AG04450 (cell line): ENCODE measurements at regions of chr1 and their contacts with region 1.

Region 1: DNA sequence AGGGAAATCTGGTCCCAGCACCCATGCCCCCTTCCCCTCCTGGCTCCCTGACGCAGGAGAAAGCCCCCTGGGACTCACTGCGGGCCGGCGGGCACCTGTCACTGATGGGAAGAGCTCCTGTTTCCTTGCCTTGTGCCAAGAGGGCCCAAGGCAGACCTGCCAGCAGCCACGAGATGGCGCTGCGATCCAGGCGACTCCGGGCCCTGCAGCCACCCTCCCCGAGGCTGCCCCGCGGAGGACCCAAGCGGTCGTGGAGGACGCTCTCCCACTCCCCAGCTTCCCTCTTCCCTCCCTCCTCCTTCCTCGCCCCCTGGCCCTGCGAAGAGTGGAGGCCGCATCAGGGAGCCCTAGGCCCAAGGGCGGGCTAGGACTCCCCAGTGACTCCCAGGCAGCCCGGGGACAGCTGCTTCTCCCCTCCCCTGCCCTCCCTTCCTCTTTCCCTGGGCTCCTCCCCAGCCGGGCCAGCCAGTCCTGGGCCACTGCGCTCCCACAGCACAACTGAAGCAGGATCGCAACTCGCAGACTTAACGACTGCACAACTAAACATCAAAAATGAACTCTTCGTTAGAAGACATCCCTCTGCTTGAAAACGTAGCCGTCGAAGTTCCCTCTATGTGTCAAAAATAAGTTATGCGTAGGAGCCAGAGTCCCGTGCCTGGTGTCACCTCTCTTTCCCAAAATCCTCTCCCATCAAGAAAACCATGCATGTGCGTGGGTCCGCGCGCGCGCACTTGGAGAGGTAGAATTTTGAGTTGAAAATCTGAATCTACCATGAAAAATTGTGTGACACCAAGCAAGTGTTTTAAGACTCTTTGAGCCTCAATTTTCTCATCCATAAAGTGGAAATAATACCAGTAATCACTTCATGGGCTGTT is 34.2 kb downstream of the BATF3 start:
- DNase-seq: peak; percentile 41
- H3K4me3 ChIP-seq: peak overlapping the region; percentile 82
- H3K27ac ChIP-seq: peak overlapping the region; percentile 21
- H3K27me3 ChIP-seq: no peaks in the 10 kb centered on the region
- CTCF ChIP-seq: peak; percentile 92

Region 2: DNA sequence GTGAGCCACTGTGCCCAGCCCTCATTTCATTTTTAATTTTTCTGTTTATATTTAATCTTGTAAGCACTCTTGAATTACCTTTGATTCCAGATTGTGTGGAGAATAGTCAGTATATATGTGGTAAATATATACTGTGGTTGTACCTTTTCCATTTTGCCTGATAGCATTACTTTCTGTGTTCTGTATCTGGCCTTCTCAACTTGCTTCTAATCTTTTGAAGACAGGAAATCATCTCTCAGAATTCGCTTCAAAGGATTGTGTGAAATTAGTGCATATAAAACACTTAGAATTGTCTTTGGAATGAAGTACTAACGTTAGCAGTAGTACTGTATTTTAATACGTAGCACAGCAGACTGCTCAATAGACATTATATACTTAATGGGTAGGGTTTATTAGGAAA is 342.4 kb before region 1 on chr1:
- CTCF ChIA-PET with region 1: no interaction called
- POLR2A ChIA-PET with region 1: no interaction called
- DNase-seq: no peak
- H3K4me3 ChIP-seq: no peak overlapping the region
- H3K27ac ChIP-seq: no peak overlapping the region
- H3K27me3 ChIP-seq: no peaks in the 10 kb centered on the region
- CTCF ChIP-seq: no peak

Region 3: GRCh38 chr1:212469701-212470458 is 195.6 kb before region 1 on chr1:
- CTCF ChIA-PET with region 1: interaction called, 11 read pairs
- POLR2A ChIA-PET with region 1: no interaction called
- DNase-seq: peak; percentile 96
- H3K4me3 ChIP-seq: no peak overlapping the region
- H3K27ac ChIP-seq: peak overlapping the region; percentile 91
- H3K27me3 ChIP-seq: peaks cover 4% of the 10 kb centered on the region
- CTCF ChIP-seq: no peak

Region 4: GRCh38 chr1:212504171-212504803 is 161.2 kb before region 1 on chr1:
- CTCF ChIA-PET with region 1: no interaction called
- POLR2A ChIA-PET with region 1: no interaction called
- DNase-seq: no peak
- H3K4me3 ChIP-seq: no peak overlapping the region
- H3K27ac ChIP-seq: no peak overlapping the region
- H3K27me3 ChIP-seq: no peaks in the 10 kb centered on the region
- CTCF ChIP-seq: no peak

Region 5: GRCh38 chr1:212589446-212589845 is 76.0 kb before region 1 on chr1:
- CTCF ChIA-PET with region 1: no interaction called
- POLR2A ChIA-PET with region 1: no interaction called
- DNase-seq: no peak
- H3K4me3 ChIP-seq: no peak overlapping the region
- H3K27ac ChIP-seq: no peak overlapping the region
- H3K27me3 ChIP-seq: peaks cover 21% of the 10 kb centered on the region
- CTCF ChIP-seq: no peak

Region 6: DNA sequence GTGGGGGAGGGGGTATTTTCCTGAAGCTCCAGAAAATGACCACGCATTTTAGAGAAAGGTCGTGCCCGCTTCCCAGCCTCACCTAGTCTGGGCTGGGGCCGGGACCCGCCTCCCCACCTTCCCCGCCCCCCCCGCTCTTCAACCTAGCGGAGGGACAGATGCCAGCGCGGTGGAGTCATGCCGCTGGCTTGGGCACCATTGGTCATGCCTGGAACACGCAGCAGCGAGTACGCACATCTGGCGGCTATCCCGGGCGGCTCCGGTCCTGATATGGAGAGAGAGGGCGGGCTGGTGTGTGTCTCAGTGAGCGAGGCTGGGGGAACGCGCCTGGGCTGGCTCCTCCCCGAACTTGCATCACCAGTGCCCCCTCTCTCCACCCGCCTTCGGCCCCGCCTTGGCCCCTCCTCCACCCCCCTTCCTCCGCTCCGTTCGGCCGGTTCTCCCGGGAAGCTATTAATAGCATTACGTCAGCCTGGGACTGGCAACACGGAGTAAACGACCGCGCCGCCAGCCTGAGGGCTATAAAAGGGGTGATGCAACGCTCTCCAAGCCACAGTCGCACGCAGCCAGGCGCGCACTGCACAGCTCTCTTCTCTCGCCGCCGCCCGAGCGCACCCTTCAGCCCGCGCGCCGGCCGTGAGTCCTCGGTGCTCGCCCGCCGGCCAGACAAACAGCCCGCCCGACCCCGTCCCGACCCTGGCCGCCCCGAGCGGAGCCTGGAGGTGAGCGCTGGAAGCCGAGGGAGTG is 57.1 kb before region 1 on chr1 and contains the start of gene ATF3:
- CTCF ChIA-PET with region 1: interaction called, 6 read pairs
- POLR2A ChIA-PET with region 1: interaction called, 40 read pairs
- DNase-seq: peak; percentile 99
- H3K4me3 ChIP-seq: peak within 1 kb of the TSS; percentile 79
- H3K27ac ChIP-seq: peak within 1 kb of the TSS; percentile 96
- H3K27me3 ChIP-seq: peaks cover 42% of the 10 kb centered on the region
- CTCF ChIP-seq: no peak
- polyA plus RNA-seq, gene ATF3: 5.5 TPM in 2 replicates

Region 7: DNA sequence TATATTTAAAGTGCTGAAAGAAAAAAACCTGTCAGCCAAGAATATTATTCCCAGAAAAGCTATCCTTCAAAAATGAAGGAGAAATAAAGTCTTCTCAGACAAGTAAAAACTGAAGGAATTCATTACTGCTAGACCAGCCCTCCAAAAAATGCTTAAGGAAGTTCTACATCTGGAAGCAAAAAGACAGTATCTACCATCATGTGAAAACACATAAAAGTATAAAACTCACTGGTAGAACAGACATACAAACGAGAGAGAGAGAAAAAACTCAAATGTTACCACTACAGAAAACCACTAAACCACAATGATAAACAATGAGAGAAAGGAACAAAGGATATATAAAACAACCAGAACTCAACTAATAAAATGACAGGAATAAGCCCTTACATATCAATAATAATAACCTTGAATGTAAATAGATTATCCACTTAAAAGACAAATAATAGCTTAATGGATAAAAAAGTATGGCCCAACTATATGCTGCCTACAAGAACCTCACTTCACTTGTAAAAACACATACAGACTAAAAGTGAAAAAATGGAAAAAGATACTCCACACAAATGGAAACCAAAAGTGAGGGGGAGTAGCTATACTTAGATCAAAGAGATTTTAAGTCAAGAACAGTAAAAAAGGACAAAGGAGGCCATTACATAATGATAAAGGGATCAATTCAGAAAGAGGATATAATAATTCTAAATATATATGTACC is 104.1 kb after region 1 on chr1:
- CTCF ChIA-PET with region 1: interaction called, 12 read pairs
- POLR2A ChIA-PET with region 1: no interaction called
- DNase-seq: no peak
- H3K4me3 ChIP-seq: no peak overlapping the region
- H3K27ac ChIP-seq: no peak overlapping the region
- H3K27me3 ChIP-seq: no peaks in the 10 kb centered on the region
- CTCF ChIP-seq: no peak

Region 8: DNA sequence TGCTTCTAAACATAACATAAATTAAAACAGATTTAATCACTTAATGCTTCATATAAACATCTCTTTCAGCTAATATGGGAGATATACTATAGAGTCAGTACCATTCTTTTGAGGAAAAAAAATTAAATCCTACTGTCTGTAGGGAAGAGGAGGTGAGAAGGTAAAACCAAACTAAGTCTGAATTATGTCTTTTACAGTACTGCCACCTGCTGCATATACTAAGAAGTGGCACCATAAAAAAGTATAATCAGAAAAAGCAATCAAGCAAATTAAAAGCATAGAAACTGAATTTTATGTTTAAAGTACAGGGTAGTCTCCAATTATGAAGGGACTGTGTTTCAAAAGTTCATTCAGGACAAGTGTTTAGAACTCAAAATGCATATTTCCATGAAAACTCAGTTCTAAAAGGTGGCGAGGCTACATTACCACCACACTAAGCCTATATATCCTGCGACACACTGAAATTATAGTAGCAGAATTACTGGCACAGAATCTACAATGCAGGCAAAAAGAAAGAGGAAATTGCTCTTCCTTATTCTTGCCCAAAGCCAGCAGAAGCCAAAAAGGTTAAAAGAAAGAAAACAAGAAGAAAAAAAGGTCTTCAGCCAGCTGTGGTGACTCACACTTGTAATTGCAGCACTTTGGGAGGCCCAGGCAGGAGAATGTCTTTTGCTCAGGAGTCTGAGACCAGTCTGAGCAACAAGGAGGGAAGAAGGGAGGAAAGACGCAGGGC is 117.1 kb after region 1 on chr1:
- CTCF ChIA-PET with region 1: interaction called, 75 read pairs
- POLR2A ChIA-PET with region 1: no interaction called
- DNase-seq: no peak
- H3K4me3 ChIP-seq: no peak overlapping the region
- H3K27ac ChIP-seq: no peak overlapping the region
- H3K27me3 ChIP-seq: no peaks in the 10 kb centered on the region
- CTCF ChIP-seq: peak; percentile 65

Region 9: GRCh38 chr1:212994926-212995325 is 329.4 kb after region 1 on chr1:
- CTCF ChIA-PET with region 1: interaction called, 23 read pairs
- POLR2A ChIA-PET with region 1: no interaction called
- DNase-seq: no peak
- H3K4me3 ChIP-seq: no peak overlapping the region
- H3K27ac ChIP-seq: no peak overlapping the region
- H3K27me3 ChIP-seq: no peaks in the 10 kb centered on the region
- CTCF ChIP-seq: no peak